Naive thymus-derived CD8-positive, alpha-beta T cell (primary cell): ENCODE measurements at regions of chr1 and their contacts with region 1.

Region 1: GRCh38 chr1:179831852-179832699 is 45.5 kb downstream of the TOR1AIP2 start:
- DNase-seq: peak in 3 of 10 donors; percentile 42 to 65 (median 62)
- ATAC-seq: peak; percentile 78 to 86
- H3K4me3 Mint-ChIP-seq: peak overlapping the region; percentile 41 to 81 (median 68)
- H3K27ac Mint-ChIP-seq: peak overlapping the region; percentile 61 to 87 (median 78)
- H3K4me1 Mint-ChIP-seq: peaks cover 20 to 27% (median 23%) of the 10 kb centered on the region in 4 donors
- H3K27me3 Mint-ChIP-seq: peaks cover 0 to under 1% (median 0%) of the 10 kb centered on the region in 5 donors

Region 2: GRCh38 chr1:179770884-179771502 is 61.1 kb before region 1 on chr1:
- POLR2A ChIA-PET with region 1: no interaction called
- DNase-seq: no peak
- ATAC-seq: no peak
- H3K4me3 Mint-ChIP-seq: no peak overlapping the region
- H3K27ac Mint-ChIP-seq: peak overlapping the region in 1 of 10 donors; percentile 41
- H3K4me1 Mint-ChIP-seq: peaks cover 0 to 4% (median 0%) of the 10 kb centered on the region in 4 donors
- H3K27me3 Mint-ChIP-seq: peaks cover 4 to 32% (median 11%) of the 10 kb centered on the region in 5 donors

Region 3: DNA sequence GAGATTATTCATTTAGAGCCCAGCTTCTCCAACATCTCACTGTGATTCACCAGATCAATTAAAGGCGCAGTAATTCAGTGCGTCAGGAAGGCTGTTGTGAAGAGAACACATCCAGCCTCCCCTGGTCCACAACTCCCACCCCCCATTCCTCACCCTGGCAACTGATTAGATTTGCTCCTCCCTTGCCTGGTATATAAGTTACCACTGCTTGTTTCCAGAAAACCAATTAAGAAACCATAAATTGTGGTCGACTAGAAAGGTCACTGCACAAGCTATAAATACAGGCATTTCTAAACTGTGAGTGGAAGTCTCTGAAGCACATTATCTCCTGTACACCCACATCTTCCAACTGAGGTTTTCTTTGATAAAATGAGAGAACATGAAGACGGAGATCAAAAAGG is 47.0 kb before region 1 on chr1:
- POLR2A ChIA-PET with region 1: no interaction called
- DNase-seq: no peak
- ATAC-seq: no peak
- H3K4me3 Mint-ChIP-seq: no peak overlapping the region
- H3K27ac Mint-ChIP-seq: no peak overlapping the region
- H3K4me1 Mint-ChIP-seq: no peaks in the 10 kb centered on the region
- H3K27me3 Mint-ChIP-seq: peaks cover 0 to 6% (median 3%) of the 10 kb centered on the region in 5 donors

Region 4: GRCh38 chr1:179814546-179814838 is 17.6 kb before region 1 on chr1:
- POLR2A ChIA-PET with region 1: interaction called, 17 read pairs
- DNase-seq: no peak
- ATAC-seq: peak in 1 of 2 donors; percentile 58
- H3K4me3 Mint-ChIP-seq: peak overlapping the region; percentile 90 to 98 (median 94)
- H3K27ac Mint-ChIP-seq: peak overlapping the region; percentile 73 to 99 (median 96)
- H3K4me1 Mint-ChIP-seq: peaks cover 10 to 27% (median 23%) of the 10 kb centered on the region in 4 donors
- H3K27me3 Mint-ChIP-seq: peaks cover 0 to 21% (median 4%) of the 10 kb centered on the region in 5 donors

Region 5: GRCh38 chr1:180327089-180327488 is 495.0 kb after region 1 on chr1:
- POLR2A ChIA-PET with region 1: no interaction called
- DNase-seq: no peak
- ATAC-seq: no peak
- H3K4me3 Mint-ChIP-seq: no peak overlapping the region
- H3K27ac Mint-ChIP-seq: no peak overlapping the region
- H3K4me1 Mint-ChIP-seq: peaks cover 0 to 18% (median 4%) of the 10 kb centered on the region in 4 donors
- H3K27me3 Mint-ChIP-seq: no peaks in the 10 kb centered on the region